HAP-1 (cell line): ENCODE measurements at regions of chr16 and their contacts with region 1.

Region 1: GRCh38 chr16:1929578-1930337 is 11.5 kb upstream of the HS3ST6 start:
- DNase-seq: peak; percentile 79 to 95
- H3K4me3 ChIP-seq: peak overlapping the region; percentile 26
- H3K4me1 ChIP-seq: peaks cover 3% of the 10 kb centered on the region; the same call in 1 of the 2 replicates
- H3K27me3 ChIP-seq: no peaks in the 10 kb centered on the region

Region 2: DNA sequence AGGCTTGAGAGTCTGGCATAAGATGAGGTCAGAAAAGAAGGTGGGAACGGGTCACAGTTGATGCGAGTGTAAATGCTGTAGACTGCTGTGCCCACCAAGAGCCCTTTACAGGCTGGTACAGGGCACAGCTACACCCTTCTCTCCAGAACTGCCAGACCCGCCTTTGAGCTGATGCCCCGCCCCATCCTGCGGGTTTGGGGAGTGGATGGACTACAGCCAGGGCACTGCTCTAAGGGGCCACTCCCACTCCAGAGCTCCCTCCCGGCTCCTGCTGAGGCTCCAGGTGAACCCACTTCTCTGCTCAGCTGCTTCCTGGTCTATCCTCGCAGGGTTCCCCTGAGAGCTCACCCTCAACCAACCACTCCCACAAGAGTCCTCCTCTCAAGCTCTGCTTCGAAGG is 70.1 kb before region 1 on chr16:
- in situ Hi-C with region 1: loop called (anchors 5 kb)
- DNase-seq: peak in 1 of 2 experiments; percentile 21
- H3K4me3 ChIP-seq: no peak overlapping the region
- H3K4me1 ChIP-seq: no peaks in the 10 kb centered on the region
- H3K27me3 ChIP-seq: peaks cover 50% of the 10 kb centered on the region